Activated T-helper 2 cell treated with anti-CD3 and anti-CD28 coated beads, Interferon-gamma antibody, Interleukin-2, Interleukin-4, amounts not matched to agents 10 μg/mL and 5 μg/mL and 100 μg/mL, durations not matched to agents 14 hours and 24 hours and 36 hours (primary cell): ENCODE measurements at regions of chr10 and their contacts with region 1.

Region 1: DNA sequence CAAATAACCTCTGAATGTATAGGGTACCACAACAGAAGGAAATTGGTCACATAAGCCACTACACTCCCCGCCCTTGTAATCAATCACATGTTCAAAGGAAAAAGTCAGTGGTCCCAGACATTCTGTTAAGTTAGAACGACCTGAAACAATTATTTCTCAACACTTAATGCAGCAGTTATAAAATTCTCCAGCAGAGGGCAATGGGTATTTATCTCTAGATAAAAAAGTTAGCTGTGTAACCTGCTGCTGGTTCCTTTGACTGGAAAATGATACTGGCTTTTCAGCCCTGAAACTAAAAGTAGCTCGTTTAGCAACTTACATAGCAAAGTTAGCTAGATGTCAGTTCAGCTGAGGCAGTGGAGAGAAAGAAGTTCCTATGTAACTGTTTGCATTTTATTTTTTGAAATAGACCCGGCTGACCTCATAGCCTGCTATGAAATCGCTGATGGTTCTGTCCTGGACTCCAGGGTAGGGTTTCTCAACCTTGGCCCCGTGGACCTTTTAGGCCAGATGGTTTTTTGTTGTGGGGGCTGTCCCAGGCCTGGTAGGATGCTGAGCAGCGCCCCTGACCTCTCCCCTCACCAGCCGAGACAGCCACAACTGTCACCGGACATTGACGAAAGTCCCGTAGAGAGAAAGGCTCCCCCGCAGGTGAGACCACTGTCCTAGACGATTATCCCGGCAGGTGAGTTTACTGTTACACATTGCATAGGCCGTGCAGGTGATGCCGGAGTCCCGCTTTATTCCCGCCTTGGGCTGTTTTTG is 40.2 kb upstream of the PROSER2 start:
- DNase-seq: no peak
- H3K4me3 Mint-ChIP-seq: no peak overlapping the region
- H3K27ac Mint-ChIP-seq: no peak overlapping the region
- H3K4me1 Mint-ChIP-seq: peaks cover 4% of the 10 kb centered on the region
- H3K27me3 Mint-ChIP-seq: peaks cover 5% of the 10 kb centered on the region

Region 2: DNA sequence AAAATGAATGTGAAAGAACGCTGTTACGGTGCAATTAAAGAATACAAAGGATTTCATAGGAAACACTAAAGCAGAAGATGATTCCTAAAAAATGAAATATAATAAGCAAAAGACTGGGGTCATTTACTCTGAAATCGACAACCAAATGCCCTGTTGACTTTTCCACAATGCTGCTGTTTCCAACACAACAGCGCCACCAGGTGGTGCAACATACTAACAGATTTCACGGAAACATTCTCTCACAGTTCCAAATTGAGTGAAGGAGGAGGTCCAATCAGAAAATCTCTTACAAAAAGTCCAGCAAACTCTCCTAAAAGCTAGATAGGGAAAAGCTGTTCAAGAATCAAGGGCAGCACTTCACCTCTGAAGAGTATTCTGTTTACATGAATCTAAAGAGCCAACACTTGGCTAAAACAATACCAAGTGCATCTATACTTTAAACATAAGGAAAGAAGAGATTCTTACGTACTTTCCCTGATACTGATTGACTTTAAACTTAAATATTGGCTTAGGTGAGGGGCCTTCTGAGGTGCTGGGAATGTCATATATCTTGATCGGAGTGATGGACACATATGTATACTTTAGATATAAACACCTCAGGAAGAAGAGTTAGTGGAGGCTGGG is 203.7 kb after region 1 on chr10:
- intact Hi-C with region 1: loop called (anchors 2 kb)
- DNase-seq: peak; percentile 50
- H3K4me3 Mint-ChIP-seq: no peak overlapping the region
- H3K27ac Mint-ChIP-seq: peak overlapping the region; percentile 51
- H3K4me1 Mint-ChIP-seq: peaks cover 6% of the 10 kb centered on the region
- H3K27me3 Mint-ChIP-seq: no peaks in the 10 kb centered on the region